ENCODE measurements at regions of chr6 and their contacts with region 1.

Region 1: GRCh38 chr6:148947621-148948444 is 201.0 kb downstream of the UST start:
- DNase-seq: peak; percentile 74 to 92 (median 85)
- ATAC-seq: peak; percentile 93 to 100 (median 97)
- H3K4me3 ChIP-seq: no peak overlapping the region
- H3K27ac ChIP-seq: no peak overlapping the region
- H3K4me1 ChIP-seq: peaks cover 0 to 5% (median 0%) of the 10 kb centered on the region in 3 donors
- H3K27me3 ChIP-seq: no peaks in the 10 kb centered on the region
- CTCF ChIP-seq: peak; percentile 79 to 91 (median 85)

Region 2: GRCh38 chr6:148578245-148578732 is 369.5 kb before region 1 on chr6:
- intact Hi-C with region 1: loop called in 2 of 3 experiments (anchors 5 to 10 kb)
- DNase-seq: peak; percentile 57 to 88 (median 71)
- ATAC-seq: peak; percentile 98 to 100 (median 100)
- H3K4me3 ChIP-seq: no peak overlapping the region
- H3K27ac ChIP-seq: no peak overlapping the region
- H3K4me1 ChIP-seq: no peaks in the 10 kb centered on the region
- H3K27me3 ChIP-seq: no peaks in the 10 kb centered on the region
- CTCF ChIP-seq: peak in 3 of 4 donors; percentile 53 to 61 (median 55)

Region 3: GRCh38 chr6:148736774-148737412 is 210.9 kb before region 1 on chr6:
- intact Hi-C with region 1: loop called in 2 of 3 experiments (anchors 10 kb)
- DNase-seq: no peak
- ATAC-seq: peak in 2 of 4 donors; percentile 20 to 41
- H3K4me3 ChIP-seq: no peak overlapping the region
- H3K27ac ChIP-seq: no peak overlapping the region
- H3K4me1 ChIP-seq: no peaks in the 10 kb centered on the region
- H3K27me3 ChIP-seq: no peaks in the 10 kb centered on the region
- CTCF ChIP-seq: no peak

Region 4: DNA sequence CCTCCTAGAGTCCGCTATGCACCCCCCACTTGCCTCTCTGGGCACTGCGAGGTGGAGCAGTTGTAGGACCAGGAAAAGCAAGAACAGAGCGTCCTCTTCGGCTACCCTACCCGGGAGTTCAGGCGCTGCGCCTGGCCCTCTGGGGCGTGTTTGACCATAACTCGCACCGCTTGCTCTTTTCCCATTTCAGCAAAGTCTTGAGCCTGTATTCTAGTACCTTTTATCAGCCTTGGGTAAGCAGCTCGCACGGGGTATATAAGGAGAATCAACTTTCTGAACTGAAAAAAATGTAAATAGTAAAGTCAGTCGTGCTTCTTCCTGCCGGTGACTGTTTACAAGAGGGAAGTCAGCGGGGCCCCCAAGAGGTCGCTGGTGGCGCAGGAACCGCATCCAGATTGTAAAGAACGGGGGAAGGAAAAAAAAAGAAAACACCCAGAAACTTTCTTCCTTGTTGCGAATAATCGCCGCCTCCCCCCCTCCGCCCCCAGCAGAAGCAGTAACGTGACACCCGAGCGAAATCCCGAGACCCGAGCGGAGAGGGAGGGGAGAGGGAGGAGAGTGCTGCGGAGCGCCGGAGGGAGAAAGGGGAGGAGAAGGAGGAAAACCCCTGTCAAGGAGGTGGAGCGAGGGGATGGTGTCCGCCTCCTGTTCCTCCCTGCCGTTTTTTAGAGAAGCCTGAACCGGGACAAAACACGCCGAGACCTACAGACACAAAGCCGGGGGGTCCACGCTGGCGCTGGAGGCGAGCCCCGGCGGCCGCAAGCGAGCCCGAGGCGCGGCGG is 201.3 kb before region 1 on chr6 and contains the start of gene UST:
- intact Hi-C with region 1: loop called in 1 of 3 experiments (anchors 10 kb)
- DNase-seq: peak; percentile 72 to 91 (median 84)
- ATAC-seq: peak; percentile 60 to 81 (median 77)
- H3K4me3 ChIP-seq: peak within 1 kb of the TSS; percentile 65 to 93 (median 81)
- H3K27ac ChIP-seq: peak within 1 kb of the TSS; percentile 23 to 86 (median 68)
- H3K4me1 ChIP-seq: peaks cover 18 to 34% (median 26%) of the 10 kb centered on the region in 3 donors
- H3K27me3 ChIP-seq: no peaks in the 10 kb centered on the region
- CTCF ChIP-seq: no peak
- total RNA-seq, gene UST: 3.8 to 20.9 (median 12.0) TPM

Region 5: DNA sequence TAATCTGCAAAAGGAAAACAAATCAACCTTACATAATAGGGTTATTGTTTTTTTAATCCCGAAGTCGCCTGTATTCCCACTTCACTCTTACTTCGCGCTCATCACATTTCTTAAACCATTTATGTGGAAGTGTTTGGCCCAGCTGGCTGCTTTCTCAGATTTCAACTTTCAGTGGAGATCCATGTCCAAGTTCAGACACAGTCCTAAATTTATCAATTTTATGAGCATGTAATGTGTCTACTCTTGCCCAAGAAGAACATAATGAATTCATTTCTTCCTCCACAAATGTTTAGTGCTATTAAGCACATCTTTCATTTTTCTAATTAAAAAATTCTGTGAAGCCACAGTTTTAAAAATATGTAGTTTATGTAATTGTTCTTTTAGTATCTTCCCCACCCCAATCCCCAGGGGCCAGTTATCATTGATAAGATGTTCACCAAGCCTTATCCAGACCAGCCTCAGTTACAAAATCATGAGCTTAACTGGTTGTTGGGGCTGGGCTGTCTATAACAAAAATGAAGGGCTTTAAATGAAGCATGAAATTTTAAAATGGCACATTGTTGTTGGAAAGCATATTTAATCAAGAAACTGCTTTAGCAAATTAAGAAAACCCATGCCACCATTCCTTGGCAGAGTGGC is 49.3 kb before region 1 on chr6:
- intact Hi-C with region 1: no loop called
- DNase-seq: no peak
- ATAC-seq: no peak
- H3K4me3 ChIP-seq: no peak overlapping the region
- H3K27ac ChIP-seq: no peak overlapping the region
- H3K4me1 ChIP-seq: no peaks in the 10 kb centered on the region
- H3K27me3 ChIP-seq: no peaks in the 10 kb centered on the region
- CTCF ChIP-seq: no peak